Panc1 (cell line): ENCODE measurements at regions of chrX and their contacts with region 1.

Region 1: DNA sequence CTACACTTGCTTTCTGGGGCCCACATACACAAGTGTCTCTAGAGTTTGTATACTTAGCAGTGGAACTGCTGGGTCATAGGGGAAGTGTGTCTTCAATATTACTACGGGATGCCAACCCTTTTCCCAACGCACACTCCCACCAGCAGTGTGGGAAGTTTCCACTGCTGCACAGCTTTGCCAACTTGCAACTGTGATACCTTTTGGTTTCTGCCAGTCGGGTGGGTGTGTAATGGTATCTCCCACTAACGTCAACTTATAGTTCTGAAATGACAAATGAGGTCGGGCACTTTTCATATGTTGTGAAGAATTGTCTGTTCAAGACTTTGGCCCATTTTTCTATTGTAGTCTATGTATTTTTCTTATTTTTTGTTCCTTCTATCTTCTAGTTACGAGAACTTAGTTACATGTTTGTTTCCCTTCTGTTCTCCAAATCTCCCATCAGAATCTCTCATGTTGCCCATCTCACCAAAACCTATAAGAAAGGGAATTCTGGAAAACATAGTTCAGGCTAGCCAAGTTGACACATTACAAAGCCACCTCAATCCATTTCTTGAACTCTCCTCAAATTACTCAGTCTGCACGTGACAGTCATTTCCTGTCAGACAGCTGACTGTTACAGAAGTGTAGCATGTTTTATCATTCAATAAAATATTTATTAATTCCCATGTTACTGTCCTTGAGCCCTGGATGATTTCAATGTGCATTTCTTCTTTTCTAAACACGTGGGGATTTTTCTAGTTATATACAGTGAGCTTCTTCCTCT is 30.7 kb downstream of the PNMA6E start:
- DNase-seq: no peak
- ATAC-seq: no peak
- H3K4me3 ChIP-seq: no peak overlapping the region
- H3K27ac ChIP-seq: no peak overlapping the region
- H3K4me1 ChIP-seq: no peaks in the 10 kb centered on the region
- H3K27me3 ChIP-seq: peaks cover 8% of the 10 kb centered on the region
- CTCF ChIP-seq: no peak

Region 2: GRCh38 chrX:152989292-152989658 is 381.2 kb before region 1 on chrX:
- CTCF ChIA-PET with region 1: no interaction called
- POLR2A ChIA-PET with region 1: no interaction called
- in situ Hi-C with region 1: no loop called
- intact Hi-C with region 1: no loop called
- DNase-seq: no peak
- ATAC-seq: no peak
- H3K4me3 ChIP-seq: no peak overlapping the region
- H3K27ac ChIP-seq: no peak overlapping the region
- H3K4me1 ChIP-seq: no peaks in the 10 kb centered on the region
- H3K27me3 ChIP-seq: no peaks in the 10 kb centered on the region
- CTCF ChIP-seq: no peak

Region 3: DNA sequence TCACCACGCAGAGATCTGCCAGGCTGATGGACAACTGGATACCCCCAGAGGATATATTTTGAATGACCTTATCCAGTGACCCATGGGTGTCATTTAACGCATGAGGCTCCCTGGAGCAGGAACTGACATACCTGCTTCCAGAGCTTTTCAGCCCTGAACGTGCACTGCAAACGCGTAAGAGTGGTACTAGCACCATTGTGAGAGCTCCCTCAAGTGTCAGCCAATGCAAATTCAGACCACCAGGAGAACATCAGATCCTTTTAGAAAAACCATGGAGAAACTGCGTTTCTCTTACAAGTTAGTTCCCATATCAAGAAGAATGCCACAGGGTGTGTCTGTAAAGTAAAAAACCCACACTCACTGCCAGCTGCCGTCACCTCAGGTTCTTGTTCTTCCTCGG is 68.1 kb after region 1 on chrX:
- CTCF ChIA-PET with region 1: interaction called, 11 read pairs
- POLR2A ChIA-PET with region 1: no interaction called
- in situ Hi-C with region 1: no loop called
- intact Hi-C with region 1: no loop called
- DNase-seq: no peak
- ATAC-seq: peak; percentile 75
- H3K4me3 ChIP-seq: no peak overlapping the region
- H3K27ac ChIP-seq: no peak overlapping the region
- H3K4me1 ChIP-seq: no peaks in the 10 kb centered on the region
- H3K27me3 ChIP-seq: no peaks in the 10 kb centered on the region
- CTCF ChIP-seq: peak; percentile 67